Breast epithelium (tissue), 4 donors: ENCODE measurements at regions of chr16 and their contacts with region 1.

Region 1: DNA sequence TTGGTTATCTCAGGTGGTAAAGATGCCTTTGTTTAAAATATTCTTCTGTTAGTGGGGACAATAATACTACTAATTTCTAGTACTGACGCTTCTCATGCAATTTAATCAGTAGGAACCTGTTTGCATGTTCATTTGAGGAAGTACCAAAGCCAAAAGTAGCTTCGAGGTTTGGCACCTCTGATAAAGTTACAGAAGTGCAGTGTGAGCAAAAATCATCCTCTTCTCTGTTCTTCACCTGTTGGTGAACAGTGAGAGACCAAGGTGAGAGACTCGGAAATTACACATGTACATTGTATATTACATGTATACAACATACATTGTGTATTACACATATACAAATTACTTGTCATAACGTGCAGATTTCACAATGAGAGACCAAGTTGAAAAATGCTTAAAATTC is 404.6 kb downstream of the MAF start:
- DNase-seq: no peak
- H3K4me3 ChIP-seq: no peak overlapping the region
- H3K27ac ChIP-seq: no peak overlapping the region
- H3K4me1 ChIP-seq: no peaks in the 10 kb centered on the region
- H3K27me3 ChIP-seq: no peaks in the 10 kb centered on the region
- CTCF ChIP-seq: no peak
- POLR2A ChIP-seq: no peak

Region 2: GRCh38 chr16:78749745-78750268 is 446.1 kb before region 1 on chr16:
- intact Hi-C with region 1: loop called (anchors 5 kb)
- DNase-seq: no peak
- H3K4me3 ChIP-seq: no peak overlapping the region
- H3K27ac ChIP-seq: no peak overlapping the region
- H3K4me1 ChIP-seq: no peaks in the 10 kb centered on the region
- H3K27me3 ChIP-seq: no peaks in the 10 kb centered on the region
- CTCF ChIP-seq: no peak
- POLR2A ChIP-seq: no peak